Gastrocnemius medialis (tissue), 4 donors: ENCODE measurements at regions of chr7 and their contacts with region 1.

Region 1: GRCh38 chr7:100119062-100119700 is at the starts of genes CNPY4 and TAF6:
- DNase-seq: peak; percentile 92 to 95
- ATAC-seq: peak; percentile 98 to 99
- H3K4me3 ChIP-seq: peak within 1 kb of the TSS; percentile 80 to 94 (median 88)
- H3K27ac ChIP-seq: peak within 1 kb of the TSS; percentile 86 to 90 (median 87)
- H3K4me1 ChIP-seq: peaks cover 17% of the 10 kb centered on the region in 2 donors
- H3K27me3 ChIP-seq: no peaks in the 10 kb centered on the region
- CTCF ChIP-seq: peak in 1 of 5 experiments; percentile 17
- POLR2A ChIP-seq: peak; percentile 39 to 48
- total RNA-seq, gene CNPY4: 2.0 to 5.0 (median 2.4) TPM
- total RNA-seq, gene TAF6: 38.6 to 71.7 (median 56.6) TPM

Region 2: GRCh38 chr7:99719996-99720769 is 399.0 kb before region 1 on chr7:
- in situ Hi-C with region 1: no loop called
- intact Hi-C with region 1: no loop called
- DNase-seq: no peak
- ATAC-seq: no peak
- H3K4me3 ChIP-seq: no peak overlapping the region
- H3K27ac ChIP-seq: no peak overlapping the region
- H3K4me1 ChIP-seq: no peaks in the 10 kb centered on the region
- H3K27me3 ChIP-seq: no peaks in the 10 kb centered on the region
- CTCF ChIP-seq: no peak
- POLR2A ChIP-seq: no peak

Region 3: GRCh38 chr7:100148559-100149350 is 29.6 kb after region 1 on chr7 and contains the start of gene LAMTOR4:
- in situ Hi-C with region 1: no loop called
- intact Hi-C with region 1: loop called (anchors 1 kb)
- DNase-seq: peak; percentile 99 to 100
- ATAC-seq: peak; percentile 100
- H3K4me3 ChIP-seq: peak within 1 kb of the TSS; percentile 81 to 97 (median 96)
- H3K27ac ChIP-seq: peak within 1 kb of the TSS; percentile 85 to 93 (median 90)
- H3K4me1 ChIP-seq: peaks cover 10% of the 10 kb centered on the region in 2 donors
- H3K27me3 ChIP-seq: no peaks in the 10 kb centered on the region
- CTCF ChIP-seq: peak in 1 of 5 experiments; percentile 32
- POLR2A ChIP-seq: peak; percentile 65 to 88
- total RNA-seq, gene LAMTOR4: 97.6 to 141 (median 127) TPM